Right ventricle myocardium superior (tissue), 1 donor: ENCODE measurements at regions of chr1 and their contacts with region 1.

Region 1: GRCh38 chr1:20633190-20634064 is at the start of gene PINK1:
- DNase-seq: peak; percentile 89
- ATAC-seq: peak; percentile 95
- total RNA-seq, gene PINK1: 288 TPM

Region 2: DNA sequence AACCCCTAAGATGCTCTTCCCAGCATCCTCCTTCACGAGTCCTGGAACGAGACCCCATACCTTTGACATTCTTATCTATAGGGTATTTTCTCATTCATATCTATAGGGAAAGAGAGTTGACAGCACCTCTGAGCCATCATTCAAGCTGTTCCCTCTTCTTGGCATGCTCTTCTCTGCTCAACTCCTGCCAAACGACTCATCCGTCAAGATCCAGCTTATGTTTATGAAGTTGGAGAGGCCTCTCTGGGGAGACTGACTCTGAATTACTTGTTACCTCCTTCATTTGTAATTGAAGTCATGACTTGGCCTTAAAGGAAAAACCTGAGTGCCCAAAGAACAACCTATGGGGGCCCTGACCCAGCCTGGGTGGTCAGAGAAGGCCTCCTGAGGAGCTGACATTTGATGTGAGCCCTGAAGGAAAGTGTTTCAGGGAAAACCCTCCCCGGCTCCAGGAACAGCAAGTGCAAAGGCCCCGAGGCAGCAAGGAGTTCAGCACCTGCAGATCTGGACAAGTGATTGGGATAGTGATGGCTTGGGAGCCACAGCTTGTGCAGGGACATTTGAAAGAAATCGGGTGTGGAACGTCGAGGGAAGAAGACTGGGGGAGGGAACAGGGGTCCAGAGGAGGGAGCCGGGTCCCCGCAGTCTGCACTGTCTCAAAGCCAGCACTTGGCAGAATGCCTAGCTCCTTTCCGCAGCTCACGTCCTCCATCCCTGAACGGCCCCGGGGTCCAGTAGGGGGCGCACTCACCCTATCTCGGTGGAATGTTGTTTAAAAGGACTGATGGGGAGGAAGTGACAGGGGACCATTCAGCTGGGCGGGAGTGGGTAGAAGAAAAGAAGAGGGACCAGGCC is 58.5 kb before region 1 on chr1:
- intact Hi-C with region 1: loop called (anchors 5 kb)
- DNase-seq: peak; percentile 93
- ATAC-seq: peak; percentile 98

Region 3: DNA sequence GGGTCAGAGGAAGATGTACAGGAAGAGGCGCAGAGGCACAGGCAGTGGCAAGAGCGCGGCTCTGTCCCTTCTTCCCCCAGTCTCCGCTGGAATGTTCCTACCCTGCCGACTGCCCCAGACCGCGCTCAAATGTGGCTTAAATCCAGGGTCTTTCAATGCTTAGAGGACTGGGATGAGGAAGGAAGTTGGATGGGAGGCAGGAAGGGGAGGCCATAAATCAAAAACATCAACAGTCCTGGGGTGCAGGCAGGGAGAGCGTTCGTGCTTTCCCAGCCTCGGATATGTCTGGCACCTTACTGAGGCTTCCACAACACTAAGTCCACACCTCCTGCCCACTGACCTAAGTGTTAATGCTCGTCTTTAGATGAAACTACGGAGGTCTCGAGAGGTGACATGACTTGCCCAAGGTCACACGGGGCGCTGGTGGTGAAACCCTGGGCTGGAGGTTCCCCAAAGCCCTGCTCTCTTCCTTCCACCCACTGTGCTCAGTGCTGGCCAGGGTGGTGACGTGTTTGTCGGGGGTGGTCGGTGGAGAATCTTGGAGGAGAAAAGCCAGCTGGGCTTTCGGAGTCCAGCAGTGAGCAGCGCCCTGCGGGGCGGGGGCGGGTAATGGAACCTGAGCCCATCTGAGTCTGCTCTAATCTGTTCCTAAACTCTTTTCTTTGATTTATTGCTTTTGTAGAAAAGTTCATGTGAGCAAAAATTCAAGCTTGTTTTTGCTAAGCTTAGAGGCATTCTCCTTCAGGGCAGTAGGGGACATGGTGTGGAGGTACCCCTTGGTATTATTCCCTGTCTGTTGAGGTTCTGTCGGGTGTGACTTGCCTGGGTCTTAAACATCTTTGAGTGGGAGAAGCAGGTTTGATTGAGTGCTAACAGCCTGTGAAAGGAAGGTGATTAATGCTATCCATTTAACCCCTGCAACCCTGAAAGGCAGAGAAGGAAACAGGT is 43.8 kb before region 1 on chr1:
- intact Hi-C with region 1: loop called (anchors 5 kb)
- DNase-seq: peak; percentile 72
- ATAC-seq: peak; percentile 67

Region 4: DNA sequence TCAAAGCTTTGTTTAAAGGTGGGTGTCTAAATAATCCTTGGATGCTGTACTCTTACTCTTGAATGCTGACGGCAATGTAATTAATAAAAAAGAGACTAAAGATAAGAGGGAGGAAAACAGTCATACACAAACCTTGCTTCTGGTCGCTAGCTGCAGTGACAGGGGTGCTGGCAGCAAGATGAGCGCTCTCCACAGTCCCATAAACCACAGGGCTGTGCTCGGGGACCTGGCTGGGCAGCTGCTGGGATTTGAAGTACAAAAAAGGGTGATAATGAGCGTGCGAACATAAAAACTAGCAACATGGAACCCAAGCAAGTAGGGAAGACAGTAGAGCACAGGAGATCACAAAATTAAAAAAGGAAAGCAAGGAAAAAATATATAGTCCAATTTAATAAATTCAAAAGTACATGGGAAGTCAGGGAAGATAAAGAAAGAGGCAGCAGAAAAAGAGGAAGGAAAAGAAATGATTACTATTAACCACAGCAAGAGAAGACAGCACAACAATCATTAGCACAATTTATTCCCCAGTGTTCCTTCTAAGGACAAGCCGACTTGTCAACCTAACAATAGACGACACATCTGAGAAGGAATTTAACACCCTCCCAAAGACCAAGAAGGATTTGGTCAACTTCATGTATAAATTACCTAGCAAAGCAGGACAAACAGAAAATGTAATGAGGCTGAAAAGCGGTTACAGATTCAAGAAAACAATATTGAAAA is 316.6 kb after region 1 on chr1:
- intact Hi-C with region 1: no loop called
- DNase-seq: no peak
- ATAC-seq: no peak